ENCODE measurements at regions of chr13 and their contacts with region 1.

Region 1: DNA sequence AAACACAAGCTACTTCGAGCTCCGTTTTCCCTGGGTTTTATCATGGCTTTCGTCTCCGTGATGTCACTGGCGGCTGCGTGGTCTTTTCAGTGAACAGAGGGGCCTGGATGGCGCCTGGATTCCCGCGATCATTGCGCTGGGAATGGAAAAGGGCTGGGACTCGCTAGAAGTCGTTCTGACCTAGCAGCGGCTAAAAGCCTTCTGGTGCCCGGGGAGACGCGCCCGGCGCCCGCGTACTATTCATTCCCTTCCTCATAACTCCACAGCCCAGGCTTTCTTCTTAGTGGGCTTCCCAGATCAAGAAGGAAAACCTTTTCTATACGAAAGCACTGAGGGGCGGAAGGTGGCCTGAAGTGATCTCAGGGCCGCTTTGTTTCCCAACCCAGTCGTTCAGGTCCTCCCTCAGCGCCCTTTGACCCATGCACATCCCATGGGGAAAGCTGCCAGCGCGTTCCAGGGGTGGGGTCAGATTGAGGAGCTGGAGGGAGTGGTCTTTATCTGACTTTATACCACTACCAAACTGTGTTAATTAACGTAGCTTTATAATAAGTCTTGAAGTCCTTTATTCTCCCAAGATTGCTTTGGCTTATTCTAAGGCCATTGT is 96.6 kb downstream of the ELF1 start:
- DNase-seq: no peak
- H3K4me3 Mint-ChIP-seq: peak overlapping the region; percentile 56
- H3K27ac Mint-ChIP-seq: peak overlapping the region; percentile 79
- H3K4me1 Mint-ChIP-seq: peaks cover 20% of the 10 kb centered on the region
- H3K27me3 Mint-ChIP-seq: no peaks in the 10 kb centered on the region

Region 2: DNA sequence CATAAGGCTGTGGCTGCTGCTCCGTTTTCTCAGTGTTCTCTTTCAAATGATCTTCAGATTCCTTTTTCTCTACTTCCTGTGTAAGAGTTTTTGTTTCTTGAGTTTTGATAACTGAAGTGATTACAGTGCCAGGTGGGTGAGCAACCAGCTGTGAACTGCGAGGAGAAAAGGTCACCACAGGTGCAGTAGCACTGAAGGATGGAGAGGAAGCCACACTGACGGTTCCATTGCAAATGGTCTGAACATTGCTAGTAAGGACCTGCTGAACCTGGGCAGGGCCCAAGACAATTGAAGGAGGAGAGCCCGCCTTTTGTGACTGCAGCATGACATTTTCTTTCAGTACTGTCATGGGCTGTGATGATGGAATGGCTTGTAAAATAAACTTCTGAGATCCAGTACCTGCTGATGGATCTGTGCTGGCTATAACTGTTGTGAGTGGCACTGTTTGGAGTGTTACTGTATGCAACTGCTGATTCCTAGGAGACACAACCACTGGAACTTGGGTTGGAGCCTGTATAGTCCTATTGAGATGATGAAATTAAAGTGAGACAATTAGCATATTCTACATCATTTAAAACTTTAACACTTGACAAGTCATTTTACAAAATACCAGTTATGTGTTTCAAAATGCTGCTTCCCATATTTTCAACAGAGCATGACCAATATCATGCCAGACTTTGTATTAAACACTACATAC is 11.1 kb after region 1 on chr13:
- CTCF ChIA-PET with region 1: interaction called, 9 read pairs
- POLR2A ChIA-PET with region 1: interaction called, 11 read pairs
- DNase-seq: no peak
- H3K4me3 Mint-ChIP-seq: no peak overlapping the region
- H3K27ac Mint-ChIP-seq: peak overlapping the region; percentile 69
- H3K4me1 Mint-ChIP-seq: peaks cover 22% of the 10 kb centered on the region
- H3K27me3 Mint-ChIP-seq: no peaks in the 10 kb centered on the region